ENCODE measurements at regions of chr3 and their contacts with region 1.

Region 1: DNA sequence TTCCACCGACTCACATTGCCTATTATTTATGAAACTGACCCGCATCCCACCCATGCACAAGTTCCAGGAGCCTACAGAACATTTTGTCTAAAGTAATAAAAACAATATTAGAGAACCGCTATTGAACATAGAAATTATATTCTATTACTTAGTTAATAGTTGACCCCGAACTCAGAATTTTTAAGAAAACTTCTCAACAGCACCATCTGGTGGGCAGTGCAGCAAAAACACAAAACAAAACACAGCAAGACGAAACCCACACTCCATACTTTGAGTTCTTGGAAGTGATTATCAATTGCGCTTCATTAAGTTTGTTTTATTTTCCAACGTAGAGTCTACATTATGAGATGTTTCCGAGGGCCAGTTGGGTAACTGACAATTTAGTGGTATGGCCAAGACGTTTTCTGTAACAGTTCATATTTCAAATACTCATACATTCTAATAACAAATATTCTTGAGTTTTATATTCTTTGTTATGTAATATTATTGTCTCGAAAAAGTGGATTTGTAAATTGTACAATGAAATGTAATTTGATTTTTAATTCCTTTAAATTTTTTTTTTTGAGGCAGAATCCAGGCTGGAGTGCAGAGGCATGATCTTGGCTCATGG is 24.0 kb upstream of the C3orf70 start:
- DNase-seq: peak in 1 of 2 donors; percentile 24
- ATAC-seq: peak in 2 of 8 donors; percentile 22 to 50
- H3K4me3 ChIP-seq: no peak overlapping the region
- H3K27ac ChIP-seq: no peak overlapping the region
- H3K4me1 ChIP-seq: peaks cover 0 to 20% (median 8%) of the 10 kb centered on the region in 9 donors
- H3K27me3 ChIP-seq: peaks cover 0 to 22% (median 5%) of the 10 kb centered on the region in 7 donors
- CTCF ChIP-seq: peak; percentile 46 to 83 (median 75)

Region 2: DNA sequence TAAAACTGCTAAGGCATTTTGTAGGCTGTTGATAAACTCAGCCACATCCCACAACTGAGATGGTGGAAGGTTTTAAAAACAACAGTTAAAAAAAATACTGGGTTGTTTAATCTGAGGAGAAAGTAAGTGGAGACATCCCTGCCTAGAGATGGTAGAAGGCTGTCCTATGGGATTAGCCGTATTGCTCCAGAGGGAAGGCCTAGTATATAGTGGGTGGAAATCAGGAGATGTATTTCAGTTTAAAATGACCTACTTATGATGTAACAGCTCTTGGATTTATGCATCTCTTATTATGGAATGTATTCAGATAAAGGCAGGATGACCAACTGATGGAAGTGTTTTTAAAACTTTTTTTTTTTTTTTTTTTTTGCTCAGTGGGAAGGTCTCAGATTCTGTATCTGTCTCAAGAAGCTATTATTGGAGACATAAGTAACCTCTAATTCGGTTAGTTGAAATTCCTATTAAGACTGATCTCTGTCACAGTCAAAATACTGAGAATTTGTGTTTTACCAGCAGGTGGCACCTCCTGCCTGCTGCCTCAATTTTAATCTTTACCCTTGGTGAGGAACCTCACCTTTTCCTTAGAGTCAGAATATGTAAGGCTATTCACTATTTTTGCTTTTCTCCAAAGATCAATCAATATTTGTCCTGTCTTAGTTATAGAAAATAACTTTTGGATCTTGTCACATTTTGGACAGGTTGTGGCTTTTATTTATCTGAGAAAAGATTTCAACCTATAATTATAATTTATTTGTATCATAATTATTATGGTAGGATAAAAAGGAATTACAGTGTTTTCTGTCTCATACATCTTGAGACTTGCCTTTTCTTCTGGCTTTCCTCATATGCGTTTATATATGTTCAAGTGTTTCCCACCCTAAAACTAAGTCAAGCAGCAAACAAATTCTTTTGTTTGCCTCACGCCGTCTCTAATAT is 301.9 kb before region 1 on chr3:
- intact Hi-C with region 1: loop called in 9 of 10 experiments (anchors 2 to 5 kb)
- DNase-seq: peak in 1 of 2 donors; percentile 10
- ATAC-seq: peak in 2 of 8 donors; percentile 29 to 48
- H3K4me3 ChIP-seq: no peak overlapping the region
- H3K27ac ChIP-seq: no peak overlapping the region
- H3K4me1 ChIP-seq: no peaks in the 10 kb centered on the region
- H3K27me3 ChIP-seq: no peaks in the 10 kb centered on the region
- CTCF ChIP-seq: peak; percentile 33 to 76 (median 60)

Region 3: DNA sequence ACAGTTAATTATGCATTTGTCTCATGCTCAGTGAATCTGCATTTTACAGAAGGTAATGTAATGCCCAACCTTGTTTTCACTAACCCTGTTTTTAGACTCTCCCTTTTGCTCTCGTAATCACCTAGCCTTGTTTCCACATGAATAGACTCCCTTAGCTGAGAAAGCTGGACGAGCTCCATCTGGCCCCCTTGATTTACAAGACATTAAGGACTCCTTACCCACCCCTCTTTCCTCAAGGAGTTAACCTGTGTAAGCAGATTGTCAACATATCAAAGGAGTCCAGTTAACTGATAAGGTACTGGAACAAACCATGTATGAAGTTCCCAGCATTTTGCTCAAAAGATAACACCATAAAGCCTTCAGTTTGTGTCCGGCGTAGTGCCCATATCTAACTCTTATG is 265.3 kb before region 1 on chr3:
- intact Hi-C with region 1: loop called in 1 of 10 experiments (anchors 10 kb)
- DNase-seq: no peak
- ATAC-seq: no peak
- H3K4me3 ChIP-seq: no peak overlapping the region
- H3K27ac ChIP-seq: no peak overlapping the region
- H3K4me1 ChIP-seq: peaks cover 0 to 13% (median 0%) of the 10 kb centered on the region in 9 donors
- H3K27me3 ChIP-seq: no peaks in the 10 kb centered on the region
- CTCF ChIP-seq: no peak

Region 4: GRCh38 chr3:184952671-184953070 is 224.2 kb before region 1 on chr3:
- intact Hi-C with region 1: loop called in 1 of 10 experiments (anchors 10 kb)
- DNase-seq: no peak
- ATAC-seq: no peak
- H3K4me3 ChIP-seq: no peak overlapping the region
- H3K27ac ChIP-seq: no peak overlapping the region
- H3K4me1 ChIP-seq: peaks cover 0 to 27% (median 14%) of the 10 kb centered on the region in 9 donors
- H3K27me3 ChIP-seq: no peaks in the 10 kb centered on the region
- CTCF ChIP-seq: no peak

Region 5: DNA sequence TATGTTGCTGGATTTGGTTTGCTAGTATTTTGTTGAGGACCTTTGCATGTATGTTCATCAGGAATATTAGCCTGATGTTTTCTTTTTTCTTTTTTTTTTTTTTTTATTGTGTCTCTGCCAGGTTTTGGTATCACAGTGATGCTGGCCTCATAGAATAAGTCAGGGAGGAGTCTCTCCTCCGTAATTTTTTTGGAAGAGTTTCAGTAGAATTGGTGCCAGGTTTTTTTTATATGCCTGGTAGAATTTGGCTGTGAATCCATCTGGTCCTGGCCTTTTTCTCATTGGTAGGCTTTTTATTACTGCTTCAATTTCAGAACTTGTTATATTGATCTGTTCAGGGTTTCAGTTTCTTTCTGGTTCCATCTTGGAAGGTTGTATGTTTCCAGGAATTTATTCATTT is 199.1 kb before region 1 on chr3:
- intact Hi-C with region 1: loop called in 1 of 10 experiments (anchors 10 kb)
- DNase-seq: no peak
- ATAC-seq: no peak
- H3K4me3 ChIP-seq: no peak overlapping the region
- H3K27ac ChIP-seq: no peak overlapping the region
- H3K4me1 ChIP-seq: peaks cover 0 to 13% (median 0%) of the 10 kb centered on the region in 9 donors
- H3K27me3 ChIP-seq: no peaks in the 10 kb centered on the region
- CTCF ChIP-seq: no peak

Region 6: GRCh38 chr3:185353823-185354614 is 177.2 kb after region 1 on chr3:
- intact Hi-C with region 1: no loop called
- DNase-seq: peak; percentile 24 to 39
- ATAC-seq: peak; percentile 52 to 86 (median 76)
- H3K4me3 ChIP-seq: no peak overlapping the region
- H3K27ac ChIP-seq: no peak overlapping the region
- H3K4me1 ChIP-seq: no peaks in the 10 kb centered on the region
- H3K27me3 ChIP-seq: no peaks in the 10 kb centered on the region
- CTCF ChIP-seq: peak; percentile 38 to 69 (median 58)